HepG2 (cell line): ENCODE measurements at regions of chr16 and their contacts with region 1.

Region 1: GRCh38 chr16:9033125-9033830 is 58.2 kb upstream of the HAPSTR1 start:
- DNase-seq: peak; percentile 76
- ATAC-seq: peak; percentile 85
- H3K4me3 ChIP-seq: no peak overlapping the region
- H3K27ac ChIP-seq: no peak overlapping the region
- H3K4me1 ChIP-seq: no peaks in the 10 kb centered on the region
- H3K27me3 ChIP-seq: peaks cover 0 to 6% of the 10 kb centered on the region in 2 experiments; a peak in 3 of 5 replicates
- CTCF ChIP-seq: peak; percentile 76
- EP300 ChIP-seq: no peak
- POLR2A ChIP-seq: no peak
- RAD21 ChIP-seq: peak; percentile 52

Region 2: DNA sequence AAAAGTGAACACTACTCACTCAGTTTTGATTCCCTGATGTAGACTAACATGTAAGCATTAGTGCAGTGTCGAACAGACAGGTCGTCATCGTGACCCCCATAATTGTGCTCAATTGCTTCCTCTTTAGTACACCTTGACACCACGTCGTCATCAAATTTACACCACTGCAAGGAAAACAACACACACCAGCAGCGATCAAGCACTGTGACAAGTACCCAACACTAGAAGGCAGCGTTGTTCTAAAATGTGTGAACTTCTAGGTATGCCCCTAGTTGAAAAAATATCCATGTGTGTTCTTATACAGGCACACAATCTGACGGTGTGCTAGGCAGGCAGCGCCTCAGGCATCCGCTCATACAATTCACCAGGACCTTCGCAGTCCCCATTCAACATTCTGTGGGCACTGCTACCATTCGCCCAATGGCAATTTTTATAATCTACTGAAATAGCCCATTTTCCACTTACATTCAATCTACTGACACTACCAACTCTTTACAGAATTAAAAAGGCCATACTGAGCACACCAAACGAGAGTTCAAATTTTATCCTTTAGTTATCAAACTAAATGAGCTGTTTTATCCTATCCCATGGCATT is 128.0 kb before region 1 on chr16:
- CTCF ChIA-PET with region 1: interaction called, 10 read pairs
- POLR2A ChIA-PET with region 1: no interaction called
- in situ Hi-C with region 1: no loop called
- intact Hi-C with region 1: loop called (anchors 1 kb)
- DNase-seq: peak; percentile 59
- ATAC-seq: peak; percentile 81
- H3K4me3 ChIP-seq: no peak overlapping the region
- H3K27ac ChIP-seq: no peak overlapping the region
- H3K4me1 ChIP-seq: no peaks in the 10 kb centered on the region
- H3K27me3 ChIP-seq: no peaks in the 10 kb centered on the region
- CTCF ChIP-seq: peak; percentile 78
- EP300 ChIP-seq: no peak
- POLR2A ChIP-seq: no peak; a peak in 1 of 4 replicates
- RAD21 ChIP-seq: peak; percentile 70

Region 3: DNA sequence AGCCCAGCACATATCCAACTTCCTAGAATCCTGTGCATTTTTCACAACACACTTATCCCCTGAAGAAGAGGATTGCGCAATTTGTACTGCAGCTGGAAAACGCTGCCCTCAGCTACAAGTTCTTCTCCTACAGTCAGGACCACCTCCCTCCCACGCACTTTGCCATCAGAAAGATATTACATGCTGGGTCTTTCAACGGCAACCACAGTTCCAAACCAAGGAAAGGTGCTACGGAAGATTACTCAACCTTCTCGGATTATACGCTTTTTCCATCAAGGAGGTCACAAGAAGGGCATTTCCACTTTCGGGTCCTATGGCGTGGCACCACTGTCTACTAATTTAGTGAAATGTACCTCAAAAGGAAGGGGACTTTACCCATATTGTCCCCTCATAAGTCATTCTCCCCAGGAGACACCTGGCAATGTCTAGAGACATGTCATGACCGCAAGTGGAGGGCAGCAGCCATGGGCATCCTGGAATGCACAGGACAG is 104.8 kb before region 1 on chr16:
- CTCF ChIA-PET with region 1: no interaction called
- POLR2A ChIA-PET with region 1: no interaction called
- in situ Hi-C with region 1: no loop called
- intact Hi-C with region 1: no loop called
- DNase-seq: no peak
- ATAC-seq: no peak
- H3K4me3 ChIP-seq: no peak overlapping the region
- H3K27ac ChIP-seq: no peak overlapping the region
- H3K4me1 ChIP-seq: peaks cover 10% of the 10 kb centered on the region
- H3K27me3 ChIP-seq: no peaks in the 10 kb centered on the region
- CTCF ChIP-seq: no peak
- EP300 ChIP-seq: no peak
- POLR2A ChIP-seq: no peak
- RAD21 ChIP-seq: no peak